Spleen (tissue), 13 donors: ENCODE measurements at regions of chr12 and their contacts with region 1.

Region 1: DNA sequence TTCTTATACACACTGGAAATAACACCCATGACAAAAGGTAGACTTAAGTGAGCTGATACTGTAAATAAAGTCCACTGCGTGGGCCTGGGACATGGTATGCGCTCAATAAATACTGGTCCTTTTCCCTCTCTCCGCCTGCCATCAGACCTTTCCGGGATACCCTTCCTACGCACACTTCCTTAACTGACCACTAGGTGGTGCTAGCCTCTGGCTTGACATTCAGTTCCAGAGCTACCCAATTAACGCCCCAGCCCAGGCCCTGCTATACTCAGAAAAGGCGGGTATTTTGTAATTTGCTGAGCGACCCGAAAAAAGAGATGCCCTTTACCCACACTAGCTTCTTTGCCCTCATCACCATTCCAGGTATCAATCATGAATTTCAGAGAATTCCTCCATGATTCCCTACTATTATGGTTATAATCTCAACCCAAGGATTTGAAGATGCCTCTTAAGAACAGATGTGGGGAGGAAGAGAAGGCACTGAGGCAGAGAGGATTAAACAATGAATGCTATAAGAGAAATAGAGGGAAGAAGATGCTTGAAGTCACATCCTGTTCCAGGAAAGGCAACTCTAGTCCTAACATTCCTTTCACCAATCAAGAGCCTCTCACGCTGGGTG is 3.9 kb upstream of the LRP1 start:
- DNase-seq: peak; percentile 78
- H3K4me3 ChIP-seq: no peak overlapping the region
- H3K27ac ChIP-seq: no peak overlapping the region
- H3K4me1 ChIP-seq: peaks cover 5 to 41% (median 27%) of the 10 kb centered on the region in 6 donors
- H3K27me3 ChIP-seq: peaks cover 0 to 35% (median 13%) of the 10 kb centered on the region in 7 donors
- CTCF ChIP-seq: peak; percentile 90 to 96 (median 94)
- POLR2A ChIP-seq: no peak

Region 2: GRCh38 chr12:57182921-57183790 is 58.8 kb after region 1 on chr12:
- intact Hi-C with region 1: loop called (anchors 5 kb)
- DNase-seq: peak; percentile 91
- H3K4me3 ChIP-seq: no peak overlapping the region
- H3K27ac ChIP-seq: no peak overlapping the region
- H3K4me1 ChIP-seq: peaks cover 0 to 6% (median 0%) of the 10 kb centered on the region in 6 donors
- H3K27me3 ChIP-seq: no peaks in the 10 kb centered on the region
- CTCF ChIP-seq: peak; percentile 86 to 97 (median 94)
- POLR2A ChIP-seq: no peak